GM12878 (cell line): ENCODE measurements at regions of chr1 and their contacts with region 1.

Region 1: DNA sequence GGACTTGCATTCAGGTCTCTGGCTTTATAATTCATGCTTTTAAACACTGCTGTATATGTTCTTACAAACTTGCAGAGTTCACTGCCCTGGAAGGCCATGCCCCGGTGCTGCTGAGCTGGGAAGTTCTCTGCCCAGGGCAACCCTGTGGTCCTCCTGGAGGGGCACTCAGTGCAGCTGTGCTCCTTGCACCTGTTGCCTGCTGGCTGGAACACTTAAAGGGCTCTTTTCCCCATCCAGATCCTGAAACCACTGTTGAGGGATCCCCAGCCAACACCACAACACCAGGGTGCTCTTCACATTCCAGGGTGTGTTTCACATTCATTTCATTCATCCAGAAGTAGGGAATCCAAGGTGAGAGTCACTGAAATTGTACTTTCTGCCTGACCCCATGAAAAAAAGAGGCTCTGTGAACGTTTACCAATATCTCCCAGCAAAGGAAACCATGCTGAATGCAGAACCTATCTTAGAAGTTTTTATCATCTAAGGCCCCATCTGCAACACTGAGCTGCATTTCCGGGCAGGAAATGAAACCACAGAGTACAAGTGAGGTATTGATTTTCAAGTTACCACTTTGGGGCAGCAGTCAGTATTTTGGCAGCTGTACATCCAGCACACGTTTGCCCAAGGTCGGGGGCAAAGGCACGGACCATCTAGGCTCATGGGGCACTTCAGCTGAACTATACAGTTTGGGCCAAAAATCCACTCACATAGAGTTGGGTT is 16.4 kb upstream of the KIAA0040 start:
- DNase-seq: peak; percentile 62
- ATAC-seq: peak; percentile 85
- H3K4me3 ChIP-seq: peak overlapping the region; percentile 30; the same call in 1 of the 2 replicates
- H3K27ac ChIP-seq: peak overlapping the region; percentile 78
- H3K4me1 ChIP-seq: peaks cover 27% of the 10 kb centered on the region
- H3K27me3 ChIP-seq: no peaks in the 10 kb centered on the region
- CTCF ChIP-seq: no peak
- EP300 ChIP-seq: no peak
- POLR2A ChIP-seq: peak; percentile 40; the same call in 1 of the 2 replicates
- RAD21 ChIP-seq: no peak

Region 2: GRCh38 chr1:175221666-175222175 is 12.8 kb after region 1 on chr1:
- CTCF ChIA-PET with region 1: interaction called, 10 read pairs
- POLR2A ChIA-PET with region 1: interaction called, 4 read pairs
- RAD21 ChIA-PET with region 1: interaction called, 3 read pairs
- SMC1A ChIA-PET with region 1: interaction called, 30 read pairs
- in situ Hi-C with region 1: no loop called
- intact Hi-C with region 1: no loop called
- DNase-seq: no peak
- ATAC-seq: no peak
- H3K4me3 ChIP-seq: no peak overlapping the region
- H3K27ac ChIP-seq: no peak overlapping the region
- H3K4me1 ChIP-seq: peaks cover 23% of the 10 kb centered on the region
- H3K27me3 ChIP-seq: no peaks in the 10 kb centered on the region
- CTCF ChIP-seq: no peak
- EP300 ChIP-seq: no peak
- POLR2A ChIP-seq: no peak
- RAD21 ChIP-seq: no peak

Region 3: GRCh38 chr1:175376194-175376593 is 167.3 kb after region 1 on chr1:
- CTCF ChIA-PET with region 1: no interaction called
- POLR2A ChIA-PET with region 1: no interaction called
- RAD21 ChIA-PET with region 1: no interaction called
- SMC1A ChIA-PET with region 1: no interaction called
- in situ Hi-C with region 1: no loop called
- intact Hi-C with region 1: no loop called
- DNase-seq: no peak
- ATAC-seq: peak; percentile 85
- H3K4me3 ChIP-seq: no peak overlapping the region
- H3K27ac ChIP-seq: no peak overlapping the region
- H3K4me1 ChIP-seq: no peaks in the 10 kb centered on the region
- H3K27me3 ChIP-seq: peaks cover 0 to 2% of the 10 kb centered on the region in 2 experiments; a peak in 2 of 4 replicates
- CTCF ChIP-seq: peak; percentile 53 to 65 (median 60)
- EP300 ChIP-seq: no peak
- POLR2A ChIP-seq: no peak
- RAD21 ChIP-seq: peak; percentile 77